ENCODE measurements at regions of chr16 and their contacts with region 1.

Region 1: DNA sequence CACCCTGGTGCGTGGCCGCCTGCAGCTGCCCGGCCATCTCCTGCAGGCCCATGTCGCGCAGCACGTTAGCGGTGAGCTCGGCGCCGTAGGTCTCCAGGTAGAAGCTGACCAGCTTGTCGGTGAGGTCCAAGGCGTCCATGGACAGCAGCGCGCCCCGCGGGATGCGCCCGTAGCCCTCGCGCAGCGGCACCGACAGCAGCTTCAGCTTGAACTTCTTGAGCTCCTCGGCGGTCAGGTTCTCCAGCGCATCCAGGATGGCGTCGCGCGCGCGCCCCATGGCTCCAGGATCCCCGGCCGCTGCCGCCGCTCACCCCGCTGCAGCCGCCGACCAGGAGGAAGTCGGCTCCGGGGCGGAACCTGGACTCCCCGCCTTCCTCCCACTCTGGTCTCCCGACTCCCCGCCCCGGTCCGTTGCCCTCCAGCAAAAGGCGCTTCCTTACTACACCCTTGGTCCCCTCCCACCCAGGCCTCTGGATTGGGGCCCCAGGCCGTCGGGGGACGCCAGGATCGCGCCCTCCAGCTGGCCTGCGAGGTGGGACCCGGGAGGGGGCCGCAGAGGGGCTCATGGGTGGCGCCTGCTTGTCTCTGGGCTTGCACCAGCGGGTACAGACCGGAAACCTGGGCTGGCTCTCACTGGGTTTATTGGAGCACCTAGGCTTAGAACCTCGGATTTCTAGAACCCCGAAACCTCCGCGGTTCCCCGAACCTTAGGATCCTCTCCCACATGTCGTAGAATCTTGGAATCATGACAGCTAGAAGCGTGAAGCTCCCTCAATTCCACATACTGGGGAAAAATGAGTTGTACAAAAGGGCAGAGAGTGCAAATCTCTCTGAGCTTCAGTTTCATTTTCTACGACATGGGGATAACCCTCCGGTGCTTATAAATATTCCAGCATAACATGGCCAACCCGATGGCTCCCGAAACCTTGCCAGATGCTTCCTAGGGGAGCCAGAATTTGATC is at the start of gene PYCARD:
- DNase-seq: peak; percentile 58
- H3K4me3 Mint-ChIP-seq: peak within 1 kb of the TSS; percentile 87
- H3K27ac Mint-ChIP-seq: peak within 1 kb of the TSS; percentile 79
- H3K4me1 Mint-ChIP-seq: peaks cover 61% of the 10 kb centered on the region
- H3K27me3 Mint-ChIP-seq: peaks cover 5% of the 10 kb centered on the region
- total RNA-seq, gene PYCARD: 96.1 to 102 TPM

Region 2: DNA sequence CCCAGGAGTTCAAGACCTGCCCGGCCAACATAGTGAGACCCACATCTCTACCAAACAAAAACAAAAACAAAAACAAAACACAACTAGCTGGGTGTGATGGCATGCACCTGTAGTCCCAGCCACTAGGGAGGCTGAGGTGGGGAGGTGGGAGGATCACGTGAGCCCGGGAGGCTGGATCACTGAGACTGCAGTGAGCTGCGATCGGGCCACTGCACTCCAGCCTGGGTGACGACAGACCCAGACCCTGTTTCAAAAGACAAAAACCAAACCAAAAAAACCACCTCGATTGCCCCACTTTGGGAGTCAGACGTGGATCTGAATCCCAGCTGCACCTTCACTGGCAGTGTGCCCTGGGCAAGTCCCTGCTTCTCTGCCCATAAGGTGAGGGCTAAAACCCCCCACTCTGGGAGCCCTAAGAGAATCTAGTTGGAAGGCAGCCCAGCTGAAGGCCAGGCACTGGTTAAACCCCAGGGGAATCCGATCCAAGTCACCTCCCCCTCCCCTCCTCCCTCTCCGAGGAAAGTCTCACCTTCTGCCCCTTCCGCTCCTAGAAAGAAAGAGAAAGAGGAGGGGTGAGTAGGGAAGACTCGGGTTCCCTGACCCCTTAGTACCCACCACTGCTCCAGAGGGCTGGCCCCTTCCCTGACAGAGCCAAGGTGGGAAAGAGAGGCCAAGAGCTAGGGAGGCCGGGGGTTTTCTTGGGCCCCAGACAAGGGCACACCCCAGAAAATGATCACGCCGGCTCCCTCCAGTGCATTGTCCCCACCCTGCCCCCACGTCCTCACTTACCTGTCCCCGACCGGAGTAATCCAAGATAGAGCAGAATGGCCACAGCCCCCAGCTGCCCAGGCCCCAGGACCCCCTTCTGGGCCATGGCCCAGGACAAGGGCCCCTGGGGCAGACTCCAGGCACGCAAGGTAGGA is 67.8 kb before region 1 on chr16:
- CTCF ChIA-PET with region 1: no interaction called
- POLR2A ChIA-PET with region 1: no interaction called
- DNase-seq: no peak
- H3K4me3 Mint-ChIP-seq: no peak overlapping the region
- H3K27ac Mint-ChIP-seq: no peak overlapping the region
- H3K4me1 Mint-ChIP-seq: no peaks in the 10 kb centered on the region
- H3K27me3 Mint-ChIP-seq: no peaks in the 10 kb centered on the region

Region 3: GRCh38 chr16:31215287-31216162 is 12.8 kb after region 1 on chr16:
- CTCF ChIA-PET with region 1: interaction called, 10 read pairs
- POLR2A ChIA-PET with region 1: interaction called, 45 read pairs
- DNase-seq: no peak
- H3K4me3 Mint-ChIP-seq: peak overlapping the region; percentile 35
- H3K27ac Mint-ChIP-seq: no peak overlapping the region
- H3K4me1 Mint-ChIP-seq: peaks cover 29% of the 10 kb centered on the region
- H3K27me3 Mint-ChIP-seq: peaks cover 47% of the 10 kb centered on the region

Region 4: GRCh38 chr16:31382485-31383161 is 179.9 kb after region 1 on chr16:
- CTCF ChIA-PET with region 1: interaction called, 38 read pairs
- POLR2A ChIA-PET with region 1: interaction called, 10 read pairs
- DNase-seq: peak; percentile 75
- H3K4me3 Mint-ChIP-seq: no peak overlapping the region
- H3K27ac Mint-ChIP-seq: no peak overlapping the region
- H3K4me1 Mint-ChIP-seq: peaks cover 21% of the 10 kb centered on the region
- H3K27me3 Mint-ChIP-seq: peaks cover 12% of the 10 kb centered on the region

Region 5: GRCh38 chr16:31440516-31441184 is 238.0 kb after region 1 on chr16:
- CTCF ChIA-PET with region 1: interaction called, 17 read pairs
- POLR2A ChIA-PET with region 1: interaction called, 8 read pairs
- DNase-seq: no peak
- H3K4me3 Mint-ChIP-seq: no peak overlapping the region
- H3K27ac Mint-ChIP-seq: no peak overlapping the region
- H3K4me1 Mint-ChIP-seq: peaks cover 26% of the 10 kb centered on the region
- H3K27me3 Mint-ChIP-seq: no peaks in the 10 kb centered on the region